Colonic mucosa (tissue), 4 donors: ENCODE measurements at regions of chr2 and their contacts with region 1.

Region 1: DNA sequence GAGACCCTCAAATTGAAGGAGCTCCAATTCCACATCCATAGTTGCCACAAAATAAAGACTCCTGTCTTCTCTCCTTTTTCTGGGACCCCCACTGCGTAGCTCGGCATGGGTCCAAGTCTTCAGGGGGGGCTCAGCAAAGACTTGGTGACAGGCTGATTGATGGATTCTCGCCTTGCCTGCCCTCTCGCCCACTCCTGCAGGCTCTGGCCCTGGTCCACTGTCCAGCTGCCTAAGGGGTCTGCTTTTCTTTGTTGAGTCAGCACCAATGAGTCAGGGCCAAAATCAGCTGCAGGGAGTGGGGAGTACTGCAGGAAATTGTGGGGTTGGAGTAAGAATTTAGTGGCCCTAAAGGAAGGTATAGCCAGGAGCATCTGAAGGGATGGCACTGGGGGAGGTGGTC is 21.5 kb downstream of the RPL37A start:
- DNase-seq: no peak
- H3K4me3 ChIP-seq: no peak overlapping the region
- H3K27ac ChIP-seq: no peak overlapping the region
- H3K4me1 ChIP-seq: no peaks in the 10 kb centered on the region
- H3K27me3 ChIP-seq: no peaks in the 10 kb centered on the region
- CTCF ChIP-seq: no peak

Region 2: DNA sequence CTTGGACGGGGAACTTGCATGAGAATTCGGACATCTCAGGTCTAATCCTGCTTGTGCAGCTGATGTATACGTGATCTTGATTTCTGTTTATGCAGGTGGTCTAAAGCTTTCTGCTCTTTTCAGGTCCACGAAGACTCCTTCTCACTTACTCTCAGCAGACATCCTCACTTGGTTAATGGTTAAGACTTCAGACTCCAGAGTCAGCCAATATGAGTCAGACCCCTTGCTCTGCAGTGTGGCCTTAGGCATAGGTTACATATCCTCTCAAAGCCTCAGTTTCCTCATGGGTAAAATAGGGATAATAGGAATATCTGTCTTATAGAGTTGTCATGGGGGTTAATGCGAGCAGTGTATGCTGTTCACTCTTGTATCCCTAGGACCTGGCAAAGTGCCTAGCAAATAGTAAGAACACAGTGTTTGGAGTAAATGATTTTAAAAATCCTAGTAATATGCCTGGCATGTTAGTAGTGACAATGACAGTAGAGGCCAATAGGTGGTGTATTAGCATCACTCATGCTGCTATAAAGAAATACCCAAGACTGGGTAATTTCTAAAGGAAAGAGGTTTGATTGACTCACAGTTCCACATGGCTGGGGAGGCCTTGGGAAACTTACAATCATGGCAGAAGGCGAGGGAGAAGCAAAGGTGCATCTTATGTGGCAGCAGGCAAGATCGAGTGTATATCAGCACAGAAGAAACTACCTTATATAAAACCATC is 368.7 kb before region 1 on chr2:
- intact Hi-C with region 1: no loop called
- DNase-seq: no peak
- H3K4me3 ChIP-seq: no peak overlapping the region
- H3K27ac ChIP-seq: no peak overlapping the region
- H3K4me1 ChIP-seq: no peaks in the 10 kb centered on the region
- H3K27me3 ChIP-seq: no peaks in the 10 kb centered on the region
- CTCF ChIP-seq: no peak

Region 3: GRCh38 chr2:216664593-216665034 is 144.5 kb after region 1 on chr2:
- intact Hi-C with region 1: loop called (anchors 1 kb)
- DNase-seq: no peak
- H3K4me3 ChIP-seq: no peak overlapping the region
- H3K27ac ChIP-seq: no peak overlapping the region
- H3K4me1 ChIP-seq: no peaks in the 10 kb centered on the region
- H3K27me3 ChIP-seq: no peaks in the 10 kb centered on the region
- CTCF ChIP-seq: no peak

Region 4: GRCh38 chr2:216687646-216688045 is 167.5 kb after region 1 on chr2:
- intact Hi-C with region 1: no loop called
- DNase-seq: no peak
- H3K4me3 ChIP-seq: no peak overlapping the region
- H3K27ac ChIP-seq: no peak overlapping the region
- H3K4me1 ChIP-seq: no peaks in the 10 kb centered on the region
- H3K27me3 ChIP-seq: peaks cover 19% of the 10 kb centered on the region
- CTCF ChIP-seq: no peak

Region 5: DNA sequence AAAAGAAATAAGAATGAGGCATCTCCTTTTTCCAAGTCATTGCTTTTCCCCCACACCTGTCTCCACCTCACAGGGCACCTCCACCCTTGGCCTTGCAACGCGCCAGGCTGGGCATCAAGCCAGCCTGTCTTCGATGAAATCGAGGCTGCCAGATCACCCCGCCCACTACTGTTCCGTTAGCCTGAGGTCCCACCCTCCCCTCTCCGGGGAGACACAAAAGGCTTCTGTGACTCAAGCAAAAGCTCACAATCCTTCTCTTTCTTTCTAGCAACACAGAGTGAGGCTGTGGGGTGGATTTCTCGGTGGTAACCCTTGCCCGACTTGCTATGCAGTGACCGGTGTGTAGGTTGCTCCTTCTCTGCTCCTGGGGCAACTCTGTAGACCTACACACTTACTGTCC is 329.8 kb after region 1 on chr2:
- intact Hi-C with region 1: no loop called
- DNase-seq: no peak
- H3K4me3 ChIP-seq: no peak overlapping the region
- H3K27ac ChIP-seq: no peak overlapping the region
- H3K4me1 ChIP-seq: no peaks in the 10 kb centered on the region
- H3K27me3 ChIP-seq: no peaks in the 10 kb centered on the region
- CTCF ChIP-seq: no peak